ENCODE measurements at regions of chr9 and their contacts with region 1.

Region 1: DNA sequence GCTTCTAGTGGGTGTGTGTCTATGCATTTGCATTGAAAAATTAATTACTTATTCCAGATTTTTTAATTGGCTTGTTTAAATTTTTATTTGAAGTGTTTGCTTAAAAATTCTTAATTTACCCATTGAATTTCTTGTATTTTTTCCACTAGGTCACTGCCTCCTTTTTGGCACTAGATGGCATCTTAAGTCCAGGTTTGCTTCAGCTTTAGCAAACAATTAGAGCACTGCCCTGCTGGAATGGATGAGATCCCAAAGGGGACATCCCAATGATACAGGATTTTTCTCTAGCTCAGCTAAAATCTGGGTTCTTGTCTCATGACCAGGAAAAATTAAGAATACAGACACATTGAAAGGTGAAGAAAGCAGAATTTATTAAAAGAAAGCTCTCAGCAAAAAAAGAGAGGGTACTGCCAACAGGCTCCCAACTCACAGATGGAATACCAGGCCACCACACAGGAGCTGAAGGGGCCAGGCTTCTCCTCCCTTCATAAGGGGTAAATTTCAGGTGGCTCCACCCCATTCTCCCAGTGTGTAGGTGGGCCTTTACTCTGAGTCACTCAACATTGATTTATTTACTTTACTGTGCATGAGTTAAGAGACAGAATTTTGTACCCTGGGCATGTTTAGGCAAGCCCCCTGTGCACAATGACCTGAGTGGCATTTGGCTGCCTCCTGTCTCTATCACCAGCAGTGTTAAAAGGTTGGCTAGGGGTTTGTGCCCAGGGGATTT is 532.4 kb downstream of the ANXA1 start:
- DNase-seq: peak; percentile 88
- H3K4me3 ChIP-seq: no peak overlapping the region
- H3K27ac ChIP-seq: peak overlapping the region; percentile 84
- H3K4me1 ChIP-seq: peaks cover 28% of the 10 kb centered on the region
- H3K27me3 ChIP-seq: no peaks in the 10 kb centered on the region
- CTCF ChIP-seq: peak; percentile 75 to 82

Region 2: GRCh38 chr9:73269430-73270101 is 414.5 kb before region 1 on chr9:
- CTCF ChIA-PET with region 1: no interaction called
- dilution Hi-C with region 1: no loop called
- in situ Hi-C with region 1: no loop called
- intact Hi-C with region 1: loop called (anchors 5 kb)
- DNase-seq: peak; percentile 27
- H3K4me3 ChIP-seq: no peak overlapping the region
- H3K27ac ChIP-seq: no peak overlapping the region
- H3K4me1 ChIP-seq: peaks cover 10% of the 10 kb centered on the region
- H3K27me3 ChIP-seq: no peaks in the 10 kb centered on the region
- CTCF ChIP-seq: peak; percentile 46 to 51

Region 3: GRCh38 chr9:73437758-73438157 is 246.3 kb before region 1 on chr9:
- CTCF ChIA-PET with region 1: no interaction called
- dilution Hi-C with region 1: no loop called
- in situ Hi-C with region 1: no loop called
- intact Hi-C with region 1: no loop called
- DNase-seq: peak; percentile 44
- H3K4me3 ChIP-seq: no peak overlapping the region
- H3K27ac ChIP-seq: no peak overlapping the region
- H3K4me1 ChIP-seq: no peaks in the 10 kb centered on the region
- H3K27me3 ChIP-seq: peaks cover 3% of the 10 kb centered on the region
- CTCF ChIP-seq: no peak

Region 4: DNA sequence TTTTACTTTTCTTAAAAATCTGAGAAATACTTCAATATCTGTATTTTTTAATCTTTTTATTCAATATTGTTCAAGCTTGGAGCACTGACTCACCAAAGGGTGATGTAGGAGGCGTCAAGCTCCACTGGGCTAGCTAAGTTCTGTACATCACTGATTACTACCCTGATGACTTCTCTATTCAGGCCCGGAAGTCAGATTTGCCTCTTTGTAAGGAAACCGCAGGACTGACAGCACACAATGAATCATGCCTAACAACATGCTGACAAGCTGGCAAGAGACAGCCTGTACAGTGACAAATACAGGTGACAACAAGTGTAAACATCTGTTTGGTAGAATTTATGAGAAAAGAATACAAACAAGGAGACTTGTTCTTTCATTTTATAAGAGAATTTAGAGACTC is 185.2 kb after region 1 on chr9:
- CTCF ChIA-PET with region 1: no interaction called
- dilution Hi-C with region 1: no loop called
- in situ Hi-C with region 1: no loop called
- intact Hi-C with region 1: loop called (anchors 10 kb)
- DNase-seq: peak; percentile 93
- H3K4me3 ChIP-seq: no peak overlapping the region
- H3K27ac ChIP-seq: no peak overlapping the region
- H3K4me1 ChIP-seq: peaks cover 14% of the 10 kb centered on the region
- H3K27me3 ChIP-seq: no peaks in the 10 kb centered on the region
- CTCF ChIP-seq: no peak

Region 5: GRCh38 chr9:74016004-74016403 is 332.0 kb after region 1 on chr9:
- CTCF ChIA-PET with region 1: no interaction called
- dilution Hi-C with region 1: no loop called
- in situ Hi-C with region 1: loop called (anchors 10 to 25 kb)
- intact Hi-C with region 1: no loop called
- DNase-seq: peak; percentile 22
- H3K4me3 ChIP-seq: no peak overlapping the region
- H3K27ac ChIP-seq: no peak overlapping the region
- H3K4me1 ChIP-seq: peaks cover 4% of the 10 kb centered on the region
- H3K27me3 ChIP-seq: no peaks in the 10 kb centered on the region
- CTCF ChIP-seq: no peak

Region 6: DNA sequence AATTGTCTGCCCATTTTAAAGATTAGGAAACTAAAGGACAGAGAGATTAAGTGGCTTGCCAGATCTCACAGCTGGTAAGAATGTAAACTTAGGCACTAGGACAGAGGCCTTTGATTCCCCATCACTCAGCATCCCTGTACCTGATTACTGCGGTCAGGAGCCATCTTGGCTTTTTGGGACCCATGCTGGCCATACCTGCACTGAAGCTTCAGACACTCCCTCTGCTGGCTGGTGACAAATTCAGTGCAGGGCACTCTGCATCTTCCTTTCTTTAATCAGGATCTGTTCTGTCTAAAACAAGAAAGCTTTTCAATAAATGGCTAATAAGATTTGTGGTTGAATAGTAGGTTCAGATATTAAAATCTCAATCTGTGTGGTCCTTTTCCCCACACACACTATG is 597.6 kb after region 1 on chr9:
- CTCF ChIA-PET with region 1: interaction called, 3 read pairs
- dilution Hi-C with region 1: no loop called
- in situ Hi-C with region 1: no loop called
- intact Hi-C with region 1: loop called (anchors 1 kb)
- DNase-seq: no peak
- H3K4me3 ChIP-seq: no peak overlapping the region
- H3K27ac ChIP-seq: no peak overlapping the region
- H3K4me1 ChIP-seq: no peaks in the 10 kb centered on the region
- H3K27me3 ChIP-seq: no peaks in the 10 kb centered on the region
- CTCF ChIP-seq: peak; percentile 14 to 38

Region 7: DNA sequence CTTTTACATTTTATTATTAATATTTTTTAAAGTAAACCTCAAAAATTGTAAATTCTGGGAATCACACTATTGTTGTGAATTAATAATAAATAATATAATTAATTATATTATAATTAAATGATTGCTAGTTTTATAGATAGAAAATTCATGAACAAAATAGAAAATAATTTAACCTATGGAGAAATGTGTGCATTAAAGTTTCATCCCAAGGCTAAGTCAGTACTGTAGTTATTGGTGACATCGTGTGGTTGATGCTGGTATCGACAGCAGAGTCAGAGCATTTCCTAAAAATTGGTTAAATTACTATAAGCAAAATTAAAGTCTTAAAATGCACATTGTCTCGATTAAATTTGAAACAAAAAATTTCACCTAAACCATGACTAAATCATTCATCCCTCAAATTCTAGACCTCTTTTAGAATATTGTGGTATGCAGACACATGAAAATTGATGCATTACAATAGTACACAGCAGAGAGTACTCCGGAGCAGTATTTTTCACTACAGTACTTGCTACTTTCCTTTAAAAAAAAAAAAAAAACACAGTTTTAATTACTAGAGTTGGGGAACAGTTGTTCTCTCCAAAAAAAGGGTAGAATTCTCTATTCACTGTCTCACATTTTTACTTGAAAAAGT is 887.0 kb after region 1 on chr9:
- CTCF ChIA-PET with region 1: no interaction called
- dilution Hi-C with region 1: no loop called
- in situ Hi-C with region 1: loop called (anchors 10 kb)
- intact Hi-C with region 1: loop called (anchors 1 kb)
- DNase-seq: peak; percentile 9
- H3K4me3 ChIP-seq: no peak overlapping the region
- H3K27ac ChIP-seq: no peak overlapping the region
- H3K4me1 ChIP-seq: no peaks in the 10 kb centered on the region
- H3K27me3 ChIP-seq: no peaks in the 10 kb centered on the region
- CTCF ChIP-seq: peak; percentile 76 to 86

Region 8: GRCh38 chr9:74742792-74743730 is 1059.0 kb after region 1 on chr9:
- CTCF ChIA-PET with region 1: no interaction called
- dilution Hi-C with region 1: no loop called
- in situ Hi-C with region 1: no loop called
- intact Hi-C with region 1: loop called (anchors 5 kb)
- DNase-seq: peak; percentile 17
- H3K4me3 ChIP-seq: no peak overlapping the region
- H3K27ac ChIP-seq: no peak overlapping the region
- H3K4me1 ChIP-seq: no peaks in the 10 kb centered on the region
- H3K27me3 ChIP-seq: peaks cover 2% of the 10 kb centered on the region
- CTCF ChIP-seq: peak; percentile 71 to 84